ENCODE measurements at regions of chr9 and their contacts with region 1.

Region 1: DNA sequence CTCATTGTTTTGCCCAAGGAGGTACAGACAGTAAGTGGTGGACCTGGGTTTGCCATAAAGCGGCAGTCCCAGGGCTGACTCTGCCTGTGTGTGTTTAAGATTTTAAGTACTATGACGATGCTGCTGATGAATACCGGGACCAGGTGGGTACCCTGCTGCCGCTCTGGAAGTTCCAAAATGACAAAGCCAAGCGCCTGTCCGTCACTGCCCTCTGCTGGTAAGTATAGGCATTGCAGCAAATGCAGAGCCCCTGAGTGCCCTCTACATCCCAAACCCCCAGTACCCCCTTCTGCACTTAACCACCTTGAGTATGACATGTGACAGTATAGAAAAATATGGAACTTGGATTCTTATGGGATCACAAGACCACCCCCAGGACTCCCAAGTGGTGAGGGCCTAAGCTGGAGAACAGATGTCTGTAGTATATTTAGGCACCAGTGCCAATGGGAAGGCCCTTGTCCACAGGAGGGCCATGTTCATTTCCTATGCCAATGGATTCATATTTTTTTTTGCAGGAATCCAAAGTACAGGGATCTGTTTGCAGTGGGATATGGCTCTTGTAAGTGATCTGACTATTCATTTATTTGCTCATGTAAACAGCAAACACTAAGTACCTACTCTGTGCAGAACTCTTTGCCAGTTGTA is 22.0 kb downstream of the ENHO start:
- DNase-seq: peak; percentile 46
- H3K4me3 ChIP-seq: no peak overlapping the region
- H3K27ac ChIP-seq: no peak overlapping the region
- H3K4me1 ChIP-seq: peaks cover 13% of the 10 kb centered on the region
- H3K27me3 ChIP-seq: peaks cover 10 to 17% of the 10 kb centered on the region in 2 experiments
- CTCF ChIP-seq: peak; percentile 85 to 93
- POLR2A ChIP-seq: no peak

Region 2: GRCh38 chr9:34430843-34431437 is 69.8 kb before region 1 on chr9:
- CTCF ChIA-PET with region 1: interaction called, 67 read pairs
- POLR2A ChIA-PET with region 1: no interaction called
- dilution Hi-C with region 1: no loop called
- intact Hi-C with region 1: no loop called
- DNase-seq: peak; percentile 64
- H3K4me3 ChIP-seq: no peak overlapping the region
- H3K27ac ChIP-seq: no peak overlapping the region
- H3K4me1 ChIP-seq: peaks cover 15% of the 10 kb centered on the region
- H3K27me3 ChIP-seq: no peaks in the 10 kb centered on the region
- CTCF ChIP-seq: no peak
- POLR2A ChIP-seq: no peak

Region 3: DNA sequence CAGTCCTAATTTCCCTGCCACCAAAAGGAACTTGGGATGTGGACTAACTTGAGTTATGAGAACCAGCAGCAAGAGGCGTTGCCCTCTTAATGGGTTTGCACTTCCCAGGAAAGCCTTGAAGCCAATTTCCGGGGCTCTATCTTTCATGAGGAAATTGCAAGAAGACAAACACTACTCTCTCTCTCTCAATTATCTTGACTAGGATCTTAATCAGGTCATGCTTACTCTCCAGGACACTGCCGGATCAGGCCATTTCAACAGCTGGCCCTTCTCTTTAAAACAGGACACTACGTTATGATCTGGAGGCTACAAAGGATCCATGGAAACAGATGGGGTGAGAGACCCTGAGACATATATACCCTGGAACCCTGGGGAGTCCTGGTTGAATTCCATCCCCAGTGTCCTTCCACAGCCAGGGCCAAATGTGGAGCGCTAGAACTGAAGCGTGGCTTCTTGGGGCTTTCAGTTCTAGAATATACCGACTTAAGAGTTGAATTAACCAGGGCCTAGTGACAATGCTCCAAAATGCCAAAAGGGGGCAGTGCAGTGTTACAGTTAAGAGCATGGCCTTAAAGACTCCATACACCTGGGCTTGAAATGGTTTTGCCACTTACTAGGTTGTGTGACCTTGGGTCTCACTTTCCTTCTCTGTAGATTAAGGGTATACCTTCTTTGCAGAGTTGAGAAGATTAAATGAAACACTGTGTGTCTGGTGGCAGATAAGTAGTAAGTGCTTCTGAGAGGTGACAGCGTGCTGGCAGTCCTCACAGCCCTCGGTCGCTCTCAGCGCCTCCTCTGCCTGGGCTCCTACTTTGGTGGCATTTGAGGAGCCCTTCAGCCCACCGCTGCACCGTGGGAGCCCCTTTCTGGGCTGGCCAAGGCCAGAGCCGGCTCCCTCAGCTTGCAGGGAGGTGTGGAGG is 63.5 kb before region 1 on chr9:
- CTCF ChIA-PET with region 1: interaction called, 67 read pairs
- POLR2A ChIA-PET with region 1: no interaction called
- dilution Hi-C with region 1: no loop called
- intact Hi-C with region 1: loop called (anchors 1 kb)
- DNase-seq: peak; percentile 83
- H3K4me3 ChIP-seq: no peak overlapping the region
- H3K27ac ChIP-seq: no peak overlapping the region
- H3K4me1 ChIP-seq: peaks cover 18% of the 10 kb centered on the region
- H3K27me3 ChIP-seq: no peaks in the 10 kb centered on the region
- CTCF ChIP-seq: peak; percentile 75 to 77
- POLR2A ChIP-seq: no peak

Region 4: GRCh38 chr9:34451545-34451944 is 49.2 kb before region 1 on chr9:
- CTCF ChIA-PET with region 1: interaction called, 11 read pairs
- POLR2A ChIA-PET with region 1: no interaction called
- dilution Hi-C with region 1: no loop called
- intact Hi-C with region 1: no loop called
- DNase-seq: no peak
- H3K4me3 ChIP-seq: no peak overlapping the region
- H3K27ac ChIP-seq: no peak overlapping the region
- H3K4me1 ChIP-seq: peaks cover 20% of the 10 kb centered on the region
- H3K27me3 ChIP-seq: no peaks in the 10 kb centered on the region
- CTCF ChIP-seq: no peak
- POLR2A ChIP-seq: no peak

Region 5: DNA sequence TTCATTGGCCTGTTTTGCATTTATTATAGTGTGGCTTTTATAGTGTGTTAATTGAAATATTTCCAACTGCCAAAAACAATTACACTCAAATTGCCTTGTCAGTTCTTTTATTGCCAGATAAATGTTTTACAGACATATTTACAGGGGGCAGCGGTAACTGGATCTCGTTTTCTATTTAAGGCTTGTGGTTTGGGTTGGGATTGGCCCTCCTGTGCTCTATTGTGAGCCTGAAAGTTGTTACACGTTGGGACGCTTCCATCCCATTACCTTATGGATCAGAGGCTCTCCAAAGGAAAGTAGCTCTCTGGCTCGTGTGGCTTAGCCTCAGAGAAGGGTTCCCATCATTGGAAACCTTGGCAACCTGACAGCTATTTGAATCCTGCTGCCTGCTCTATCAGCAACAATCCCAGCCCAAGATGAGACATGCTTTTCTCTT is 21.3 kb before region 1 on chr9:
- CTCF ChIA-PET with region 1: no interaction called
- POLR2A ChIA-PET with region 1: no interaction called
- dilution Hi-C with region 1: no loop called
- intact Hi-C with region 1: no loop called
- DNase-seq: no peak
- H3K4me3 ChIP-seq: no peak overlapping the region
- H3K27ac ChIP-seq: no peak overlapping the region
- H3K4me1 ChIP-seq: no peaks in the 10 kb centered on the region
- H3K27me3 ChIP-seq: peaks cover 15 to 24% of the 10 kb centered on the region in 2 experiments
- CTCF ChIP-seq: no peak
- POLR2A ChIP-seq: no peak

Region 6: GRCh38 chr9:34522971-34523797 is 22.4 kb after region 1 on chr9 and contains the start of gene ENHO:
- CTCF ChIA-PET with region 1: interaction called, 10 read pairs
- POLR2A ChIA-PET with region 1: interaction called, 4 read pairs
- dilution Hi-C with region 1: no loop called
- intact Hi-C with region 1: no loop called
- DNase-seq: peak; percentile 94
- H3K4me3 ChIP-seq: peak within 1 kb of the TSS in 2 of 3 experiments; percentile 14 to 32
- H3K27ac ChIP-seq: no peak within 1 kb of the TSS
- H3K4me1 ChIP-seq: peaks cover 3% of the 10 kb centered on the region
- H3K27me3 ChIP-seq: peaks cover 8 to 25% of the 10 kb centered on the region in 2 experiments
- CTCF ChIP-seq: no peak
- POLR2A ChIP-seq: no peak
- total RNA-seq, gene ENHO: not detected in 2 replicates